ENCODE measurements at regions of chr14 and their contacts with region 1.

Region 1: DNA sequence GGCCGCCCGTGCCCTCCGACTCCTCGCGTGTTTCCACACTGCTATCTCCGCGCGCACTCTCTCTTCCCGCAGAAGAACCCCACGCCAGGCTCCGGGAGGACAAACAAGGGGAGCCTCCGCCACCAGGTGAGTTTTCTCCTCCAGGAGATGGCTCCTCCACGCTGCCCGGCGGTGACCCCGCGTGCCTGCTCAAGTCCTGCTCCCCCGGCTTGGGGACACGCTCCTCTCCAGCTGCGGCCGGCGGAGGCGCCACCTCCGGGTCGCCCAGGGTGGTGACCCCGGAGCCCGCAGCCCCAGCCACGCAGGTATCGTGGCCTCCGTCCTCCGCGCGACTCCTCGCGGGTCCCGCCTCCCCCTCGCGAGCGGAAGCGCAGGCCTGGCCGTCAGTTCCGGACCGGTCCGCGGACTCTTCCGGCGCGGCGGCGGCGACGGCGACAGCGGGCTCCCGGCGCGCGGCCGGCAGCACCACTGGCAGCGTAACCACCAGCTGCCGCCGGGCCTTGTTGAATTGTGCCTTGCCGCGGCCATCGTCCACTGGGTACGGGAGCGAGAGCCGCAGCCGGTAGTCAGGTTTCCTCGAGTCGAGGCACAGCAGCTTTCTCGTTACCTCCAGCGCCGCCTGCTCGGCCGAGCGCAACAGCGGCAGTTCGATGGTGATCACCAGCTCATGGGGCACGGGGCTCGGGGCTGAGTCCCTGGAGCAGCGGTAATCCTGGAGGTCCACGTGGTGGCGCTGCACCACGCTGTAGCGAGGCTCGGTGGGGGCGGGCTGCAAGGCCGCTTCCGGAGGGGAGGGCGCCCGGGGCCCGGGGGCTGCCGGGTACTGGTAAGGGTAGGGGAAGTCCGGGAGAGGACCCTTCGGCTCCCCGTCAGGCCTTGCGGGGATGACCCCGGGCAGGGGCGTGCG is 1.2 kb downstream of the DNAAF2 start:
- DNase-seq: peak; percentile 94
- H3K4me3 ChIP-seq: peak overlapping the region; percentile 92
- H3K27ac ChIP-seq: peak overlapping the region; percentile 99
- H3K4me1 ChIP-seq: no peaks in the 10 kb centered on the region
- H3K27me3 ChIP-seq: no peaks in the 10 kb centered on the region
- CTCF ChIP-seq: peak; percentile 73

Region 2: DNA sequence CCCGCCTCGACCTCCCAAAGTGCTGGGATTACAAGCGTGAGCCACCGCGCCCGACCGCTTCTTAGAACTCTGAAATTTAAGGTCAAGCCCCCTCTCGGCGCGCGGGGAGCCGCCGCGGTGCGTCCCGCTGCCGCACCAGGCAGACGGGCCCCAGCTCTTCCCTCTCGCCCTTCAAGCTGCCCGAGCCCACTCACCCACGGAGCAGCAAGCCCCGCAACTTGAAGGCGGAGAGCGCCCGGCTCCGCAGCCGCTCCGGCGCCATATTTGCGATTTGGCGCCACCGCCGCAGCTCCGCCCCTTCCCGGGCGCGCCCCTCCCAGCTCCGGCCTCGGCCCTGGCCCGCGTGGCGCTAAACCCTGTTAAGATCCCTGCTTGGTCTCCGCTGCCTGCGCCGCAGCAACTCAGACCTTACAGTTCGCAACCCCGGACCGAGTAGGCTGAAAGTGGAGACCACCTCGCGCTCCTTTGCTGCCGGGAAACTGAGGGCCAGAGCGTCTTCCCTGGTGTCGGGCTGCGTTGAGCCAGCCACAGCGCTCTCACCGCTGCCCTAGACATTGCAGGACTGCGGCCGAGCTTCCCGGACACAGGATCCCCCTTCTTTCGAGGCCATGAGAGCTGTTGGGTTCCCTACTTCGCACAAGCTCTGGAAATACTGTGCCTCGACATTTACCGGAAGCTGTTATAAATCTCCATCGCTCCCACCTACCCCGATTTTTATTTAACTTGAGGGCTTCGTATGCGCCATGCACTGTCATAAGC is 54.2 kb after region 1 on chr14 and contains the start of gene POLE2:
- intact Hi-C with region 1: no loop called
- DNase-seq: peak; percentile 78
- H3K4me3 ChIP-seq: peak within 1 kb of the TSS; percentile 57
- H3K27ac ChIP-seq: peak within 1 kb of the TSS; percentile 69
- H3K4me1 ChIP-seq: no peaks in the 10 kb centered on the region
- H3K27me3 ChIP-seq: no peaks in the 10 kb centered on the region
- CTCF ChIP-seq: no peak
- total RNA-seq, gene POLE2: 2.5 to 15.9 TPM

Region 3: DNA sequence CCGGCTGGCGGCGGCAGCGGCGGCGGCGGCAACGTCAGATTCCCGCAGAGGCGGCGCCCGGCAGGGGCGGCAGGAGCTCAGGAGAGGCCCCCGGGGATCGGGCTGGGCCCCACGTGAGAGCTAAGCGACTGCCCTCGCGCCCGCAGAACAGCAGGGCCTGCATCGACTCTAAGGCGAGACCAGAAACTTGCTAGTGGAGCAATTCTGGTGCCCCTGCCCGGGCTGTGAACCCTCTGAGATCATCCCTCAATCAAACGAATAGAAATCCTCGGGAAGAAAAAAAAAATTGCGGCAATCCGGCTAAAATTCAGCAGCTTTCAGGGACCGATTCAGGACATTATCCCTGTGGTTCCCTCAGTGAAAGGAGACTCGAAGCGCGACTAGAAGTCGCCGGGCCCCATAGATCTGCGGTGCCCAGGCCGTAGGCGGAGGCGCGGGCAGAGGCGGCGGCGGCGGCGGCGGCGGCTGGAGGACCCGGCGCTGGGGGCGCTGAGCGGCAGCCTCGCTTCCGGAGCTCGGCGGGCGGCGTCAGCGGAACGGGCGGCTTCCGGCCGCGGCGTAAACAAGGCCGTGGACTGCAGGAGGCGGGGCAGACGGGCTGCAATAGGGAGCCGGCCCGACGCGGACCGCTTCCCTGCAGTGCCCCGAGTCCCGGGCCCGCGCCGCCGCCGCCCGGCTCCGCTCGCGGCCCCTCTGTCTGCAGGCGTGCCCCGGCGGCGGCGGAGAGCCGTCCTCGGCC is 133.8 kb after region 1 on chr14 and contains the start of gene KLHDC2:
- intact Hi-C with region 1: loop called (anchors 5 kb)
- DNase-seq: peak; percentile 87
- H3K4me3 ChIP-seq: peak within 1 kb of the TSS; percentile 88
- H3K27ac ChIP-seq: peak within 1 kb of the TSS; percentile 97
- H3K4me1 ChIP-seq: peaks cover 10% of the 10 kb centered on the region
- H3K27me3 ChIP-seq: no peaks in the 10 kb centered on the region
- CTCF ChIP-seq: no peak
- total RNA-seq, gene KLHDC2: 37.5 to 68.7 TPM

Region 4: DNA sequence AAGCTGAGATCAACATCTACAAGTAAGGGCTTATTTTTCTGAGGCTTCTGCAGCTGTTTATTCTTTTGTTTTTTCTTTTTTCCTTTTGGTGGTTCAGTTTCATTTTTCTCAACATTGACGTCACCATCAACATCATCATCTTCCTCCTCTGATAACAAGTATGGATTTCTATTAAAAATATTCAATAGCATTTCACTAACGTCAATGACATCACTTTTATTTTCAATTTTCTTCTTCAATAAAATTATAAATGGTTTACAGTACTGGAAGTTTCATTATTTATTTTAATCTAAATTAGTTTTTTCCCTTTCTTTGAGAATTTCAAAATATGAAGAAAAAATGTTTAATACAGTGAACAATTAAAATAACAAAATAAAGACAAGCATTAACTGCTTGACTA is 194.7 kb after region 1 on chr14:
- intact Hi-C with region 1: loop called (anchors 5 kb)
- DNase-seq: no peak
- H3K4me3 ChIP-seq: no peak overlapping the region
- H3K27ac ChIP-seq: no peak overlapping the region
- H3K4me1 ChIP-seq: no peaks in the 10 kb centered on the region
- H3K27me3 ChIP-seq: no peaks in the 10 kb centered on the region
- CTCF ChIP-seq: no peak

Region 5: DNA sequence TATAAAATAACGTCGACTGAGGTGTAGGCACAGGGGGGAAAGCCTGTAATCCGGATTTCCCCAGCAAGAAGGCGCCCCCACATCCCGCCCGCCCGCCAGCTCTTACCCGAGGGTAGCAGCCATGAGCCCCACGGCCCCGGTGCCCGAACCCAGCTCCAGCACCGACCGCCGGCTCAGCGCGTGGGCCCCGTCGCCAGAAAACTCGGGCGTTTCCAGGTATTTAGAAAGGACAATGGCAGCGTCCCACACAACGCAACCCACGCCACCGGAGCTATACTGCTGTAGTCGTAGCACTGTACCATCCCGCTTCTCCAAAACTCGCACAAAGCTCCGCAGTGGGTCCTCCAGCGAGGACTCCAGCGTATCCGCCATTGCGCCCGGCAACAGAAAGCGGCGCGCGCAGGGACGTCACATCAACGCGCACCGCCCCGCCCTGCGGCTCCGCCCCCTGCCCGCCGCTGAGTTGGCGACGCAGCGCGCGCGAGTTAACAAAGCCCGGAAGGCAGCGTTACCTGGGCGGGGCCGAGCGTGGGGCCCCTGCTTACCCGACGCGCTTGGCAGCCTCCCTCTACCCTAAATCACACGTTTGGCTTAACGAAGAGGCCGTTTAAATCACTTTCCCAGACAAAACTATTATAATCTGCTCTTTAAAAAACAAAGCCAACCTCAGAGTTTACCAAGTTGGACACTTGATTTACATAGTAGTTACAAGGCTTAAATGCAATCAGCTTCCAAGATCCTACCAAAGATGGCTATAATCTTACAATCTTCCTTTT is 482.5 kb after region 1 on chr14 and contains the start of gene VCPKMT:
- intact Hi-C with region 1: loop called (anchors 10 kb)
- DNase-seq: peak; percentile 96
- H3K4me3 ChIP-seq: peak within 1 kb of the TSS; percentile 65
- H3K27ac ChIP-seq: peak within 1 kb of the TSS; percentile 66
- H3K4me1 ChIP-seq: peaks cover 8% of the 10 kb centered on the region
- H3K27me3 ChIP-seq: no peaks in the 10 kb centered on the region
- CTCF ChIP-seq: no peak
- total RNA-seq, gene VCPKMT: 4.6 to 6.7 TPM

Measured in colonic mucosa (tissue), 4 donors.